ENCODE measurements at regions of chr1 and their contacts with region 1.

Region 1: GRCh38 chr1:112866151-112866550 is 89.8 kb downstream of the SLC16A1 start:
- DNase-seq: peak; percentile 60 to 91
- H3K4me3 ChIP-seq: no peak overlapping the region
- H3K27ac ChIP-seq: peak overlapping the region; percentile 67
- H3K4me1 ChIP-seq: peaks cover 49% of the 10 kb centered on the region
- H3K27me3 ChIP-seq: no peaks in the 10 kb centered on the region
- CTCF ChIP-seq: no peak

Region 2: DNA sequence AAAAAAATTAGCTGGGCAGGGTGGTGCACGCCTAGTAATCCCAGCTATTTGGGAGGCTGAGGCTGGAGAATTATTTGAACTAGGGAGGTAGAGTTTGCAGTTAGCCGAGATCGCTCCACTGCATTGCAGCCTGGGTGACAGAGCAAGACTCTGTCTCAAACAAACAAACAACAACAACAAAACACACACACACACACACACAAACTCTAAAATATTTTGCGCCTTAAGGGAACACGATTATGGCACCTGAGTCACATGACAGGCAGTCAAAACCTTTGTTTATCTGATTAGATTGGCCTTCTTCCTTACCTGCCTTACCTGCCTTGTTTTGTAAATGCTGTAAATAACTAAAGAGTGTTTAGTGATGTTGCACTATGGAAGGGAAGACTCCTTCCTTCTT is 378.0 kb before region 1 on chr1:
- CTCF ChIA-PET with region 1: no interaction called
- POLR2A ChIA-PET with region 1: no interaction called
- intact Hi-C with region 1: no loop called
- DNase-seq: no peak
- H3K4me3 ChIP-seq: no peak overlapping the region
- H3K27ac ChIP-seq: no peak overlapping the region
- H3K4me1 ChIP-seq: no peaks in the 10 kb centered on the region
- H3K27me3 ChIP-seq: no peaks in the 10 kb centered on the region
- CTCF ChIP-seq: no peak

Region 3: GRCh38 chr1:112809253-112809684 is 56.9 kb before region 1 on chr1:
- CTCF ChIA-PET with region 1: interaction called, 3 read pairs
- POLR2A ChIA-PET with region 1: no interaction called
- intact Hi-C with region 1: loop called (anchors 2 kb)
- DNase-seq: peak; percentile 49 to 79
- H3K4me3 ChIP-seq: no peak overlapping the region
- H3K27ac ChIP-seq: no peak overlapping the region
- H3K4me1 ChIP-seq: peaks cover 21% of the 10 kb centered on the region
- H3K27me3 ChIP-seq: no peaks in the 10 kb centered on the region
- CTCF ChIP-seq: peak; percentile 98

Region 4: GRCh38 chr1:112840631-112841624 is 25.2 kb before region 1 on chr1:
- CTCF ChIA-PET with region 1: no interaction called
- POLR2A ChIA-PET with region 1: interaction called, 11 read pairs
- intact Hi-C with region 1: no loop called
- DNase-seq: peak in 1 of 2 experiments; percentile 80
- H3K4me3 ChIP-seq: no peak overlapping the region
- H3K27ac ChIP-seq: peak overlapping the region; percentile 1; the same call in 1 of the 2 replicates
- H3K4me1 ChIP-seq: peaks cover 44% of the 10 kb centered on the region
- H3K27me3 ChIP-seq: no peaks in the 10 kb centered on the region
- CTCF ChIP-seq: no peak

Region 5: GRCh38 chr1:112849425-112850033 is 16.6 kb before region 1 on chr1:
- CTCF ChIA-PET with region 1: no interaction called
- POLR2A ChIA-PET with region 1: no interaction called
- intact Hi-C with region 1: loop called (anchors 2 kb)
- DNase-seq: peak; percentile 69 to 77
- H3K4me3 ChIP-seq: peak overlapping the region; percentile 73
- H3K27ac ChIP-seq: peak overlapping the region; percentile 88
- H3K4me1 ChIP-seq: peaks cover 43% of the 10 kb centered on the region
- H3K27me3 ChIP-seq: no peaks in the 10 kb centered on the region
- CTCF ChIP-seq: no peak